ENCODE measurements at regions of chr3 and their contacts with region 1.

Region 1: DNA sequence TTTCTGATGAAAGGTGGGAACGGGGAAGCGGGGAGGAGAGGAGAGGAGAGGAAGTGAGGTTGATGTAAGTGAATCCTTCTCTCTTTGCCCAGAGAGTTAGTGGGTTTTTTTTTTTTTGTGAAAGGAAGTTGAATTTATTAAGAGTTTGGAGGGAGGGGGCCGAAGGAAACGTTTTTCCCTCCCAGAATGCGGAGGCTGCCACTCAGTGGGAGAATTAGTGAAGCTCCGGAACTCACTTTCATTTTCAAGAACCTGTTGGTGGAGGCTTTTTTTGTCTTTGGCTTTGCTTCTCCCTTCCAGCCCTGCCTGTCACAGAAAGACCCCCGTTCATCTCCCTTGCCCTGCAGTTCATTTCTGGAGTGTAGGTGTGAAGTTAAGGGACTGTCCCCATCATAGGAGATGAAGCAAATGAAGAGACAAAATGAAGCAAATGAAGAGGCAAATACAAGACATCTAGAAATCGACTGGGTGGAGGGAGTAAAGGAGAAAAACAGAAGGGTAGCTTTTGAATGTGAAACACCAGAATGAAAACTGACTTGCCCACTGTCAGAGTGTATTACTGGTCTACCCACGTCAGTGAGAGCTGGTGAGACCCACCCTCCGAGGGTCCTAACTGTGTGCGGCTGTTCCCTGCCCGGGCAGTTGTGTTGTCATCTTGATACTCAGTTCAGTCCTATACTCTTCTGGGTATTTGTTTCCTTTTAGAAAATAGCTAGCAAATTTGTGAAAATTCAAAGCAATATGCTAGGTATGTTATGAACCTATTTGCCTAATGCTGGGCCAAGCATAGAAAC is 91.5 kb downstream of the ITPR1 start:
- DNase-seq: peak; percentile 67
- H3K4me3 ChIP-seq: peak overlapping the region; percentile 15 to 42 (median 38)
- H3K27ac ChIP-seq: peak overlapping the region; percentile 69 to 82 (median 78)
- H3K4me1 ChIP-seq: peaks cover 0 to 82% (median 70%) of the 10 kb centered on the region in 4 donors
- H3K27me3 ChIP-seq: no peaks in the 10 kb centered on the region
- CTCF ChIP-seq: no peak
- EP300 ChIP-seq: no peak
- POLR2A ChIP-seq: no peak

Region 2: GRCh38 chr3:4466741-4467521 is 117.7 kb before region 1 on chr3 and contains the start of gene SUMF1:
- intact Hi-C with region 1: loop called (anchors 10 kb)
- DNase-seq: peak; percentile 89
- H3K4me3 ChIP-seq: peak within 1 kb of the TSS; percentile 77 to 88 (median 80)
- H3K27ac ChIP-seq: peak within 1 kb of the TSS; percentile 81 to 83 (median 82)
- H3K4me1 ChIP-seq: peaks cover 0 to 15% (median 8%) of the 10 kb centered on the region in 4 donors
- H3K27me3 ChIP-seq: no peaks in the 10 kb centered on the region
- CTCF ChIP-seq: no peak
- EP300 ChIP-seq: no peak
- POLR2A ChIP-seq: peak in 1 of 2 donors; percentile 15
- total RNA-seq, gene SUMF1: 20.2 to 57.4 (median 31.0) TPM

Region 3: GRCh38 chr3:4633078-4634004 is 48.7 kb after region 1 on chr3:
- intact Hi-C with region 1: loop called (anchors 5 kb)
- DNase-seq: no peak
- H3K4me3 ChIP-seq: no peak overlapping the region
- H3K27ac ChIP-seq: peak overlapping the region in 3 of 4 donors; percentile 34 to 47 (median 42)
- H3K4me1 ChIP-seq: peaks cover 0 to 3% (median 0%) of the 10 kb centered on the region in 4 donors
- H3K27me3 ChIP-seq: no peaks in the 10 kb centered on the region
- CTCF ChIP-seq: peak; percentile 70 to 87 (median 74)
- EP300 ChIP-seq: no peak
- POLR2A ChIP-seq: no peak